Heart left ventricle (tissue), 16 donors: ENCODE measurements at regions of chr20 and their contacts with region 1.

Region 1: GRCh38 chr20:44467289-44467883 is 8.3 kb upstream of the TTPAL start:
- DNase-seq: peak in 1 of 5 donors; percentile 66
- ATAC-seq: peak; percentile 48 to 77 (median 68)
- H3K4me3 ChIP-seq: no peak overlapping the region
- H3K27ac ChIP-seq: peak overlapping the region in 1 of 12 donors; percentile 31
- H3K4me1 ChIP-seq: peaks cover 0 to 5% (median 0%) of the 10 kb centered on the region in 12 donors
- H3K27me3 ChIP-seq: no peaks in the 10 kb centered on the region
- CTCF ChIP-seq: no peak
- POLR2A ChIP-seq: no peak

Region 2: DNA sequence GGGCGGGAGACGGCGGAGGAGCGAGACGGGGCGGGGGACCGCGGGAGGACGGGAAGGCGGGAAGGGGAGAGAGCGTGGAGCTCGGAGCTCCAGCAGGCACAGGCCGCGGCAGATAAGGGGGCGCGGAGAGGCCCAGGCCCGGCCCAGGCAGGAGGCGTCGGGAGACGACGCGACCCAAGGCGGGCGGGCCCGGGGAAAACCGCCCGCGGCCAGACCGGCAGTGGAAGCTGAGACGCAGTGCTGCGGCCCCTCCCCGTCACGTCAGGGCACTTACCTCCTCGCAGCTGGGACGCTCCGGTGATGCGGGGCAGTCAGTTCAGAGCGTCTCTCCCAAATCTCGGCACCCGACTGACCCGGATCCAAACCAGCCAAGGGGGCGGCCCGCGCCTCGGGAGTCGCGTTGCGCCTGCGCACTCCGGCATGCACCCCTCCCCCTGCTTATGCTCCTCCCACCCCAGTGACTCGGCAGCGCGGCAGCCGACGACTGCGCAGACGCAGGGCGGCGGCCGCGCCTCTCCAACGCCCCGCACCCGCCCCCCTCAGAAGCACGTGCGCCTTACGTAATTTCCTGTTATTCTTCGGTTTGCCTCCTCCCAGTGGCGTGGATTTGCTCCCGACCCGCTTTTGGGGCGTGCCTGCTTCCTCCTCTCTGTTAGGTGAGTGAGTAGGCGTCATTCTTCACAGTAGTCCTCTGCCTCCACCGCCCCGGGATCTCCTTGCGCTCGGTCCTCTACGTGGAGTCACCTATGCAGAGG is 256.8 kb before region 1 on chr20 and contains the start of gene OSER1:
- intact Hi-C with region 1: loop called in 6 of 10 experiments (anchors 5 to 10 kb)
- DNase-seq: peak; percentile 97 to 99 (median 97)
- ATAC-seq: peak; percentile 90 to 95 (median 93)
- H3K4me3 ChIP-seq: peak within 1 kb of the TSS; percentile 63 to 98 (median 84)
- H3K27ac ChIP-seq: peak within 1 kb of the TSS; percentile 85 to 97 (median 92)
- H3K4me1 ChIP-seq: peaks cover 7 to 56% (median 42%) of the 10 kb centered on the region in 12 donors
- H3K27me3 ChIP-seq: no peaks in the 10 kb centered on the region
- CTCF ChIP-seq: no peak
- POLR2A ChIP-seq: peak; percentile 77 to 89
- total RNA-seq, gene OSER1: 20.6 to 39.0 (median 34.1) TPM

Region 3: DNA sequence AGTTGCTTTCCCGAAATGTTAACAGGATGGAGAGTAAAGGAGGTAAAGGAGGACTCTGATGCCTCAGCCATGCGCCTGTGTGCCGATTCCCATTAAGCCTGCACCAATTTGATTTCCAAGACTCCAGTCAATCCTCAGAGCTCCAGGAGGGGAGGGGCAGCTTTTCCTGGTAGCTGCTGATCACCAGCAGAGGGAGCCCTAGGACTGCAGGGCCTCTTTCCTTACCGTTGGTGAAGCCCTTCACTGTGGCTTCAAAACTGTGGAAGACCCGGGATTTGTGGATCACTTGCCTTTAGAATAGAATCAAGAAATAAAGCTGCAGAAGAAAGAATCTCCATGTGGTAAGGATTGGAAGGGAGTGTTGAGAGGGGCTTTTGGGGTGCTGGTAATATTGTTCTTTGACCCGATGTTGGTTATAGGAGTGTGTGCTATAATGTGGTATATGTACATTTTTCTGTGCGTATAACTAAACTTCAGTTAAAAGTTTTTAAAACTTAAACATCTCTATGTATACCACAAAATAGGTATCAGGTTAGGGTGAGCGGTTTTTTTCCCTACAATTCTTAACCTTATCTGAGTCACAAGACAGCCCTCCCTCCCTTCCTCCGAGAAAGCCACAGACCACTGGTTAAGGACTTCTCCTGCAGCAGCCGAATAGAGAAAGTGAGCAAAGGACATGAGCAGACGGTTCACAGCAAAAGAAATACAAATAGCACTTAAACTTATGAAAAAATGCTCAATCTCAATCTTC is 249.9 kb before region 1 on chr20:
- intact Hi-C with region 1: loop called in 7 of 10 experiments (anchors 5 to 10 kb)
- DNase-seq: peak; percentile 64 to 84 (median 69)
- ATAC-seq: peak in 3 of 4 donors; percentile 76 to 81 (median 78)
- H3K4me3 ChIP-seq: peak overlapping the region in 11 of 12 donors; percentile 3 to 46 (median 33)
- H3K27ac ChIP-seq: peak overlapping the region in 10 of 12 donors; percentile 12 to 72 (median 41)
- H3K4me1 ChIP-seq: peaks cover 0 to 21% (median 11%) of the 10 kb centered on the region in 12 donors
- H3K27me3 ChIP-seq: no peaks in the 10 kb centered on the region
- CTCF ChIP-seq: peak; percentile 76 to 92 (median 86)
- POLR2A ChIP-seq: no peak

Region 4: DNA sequence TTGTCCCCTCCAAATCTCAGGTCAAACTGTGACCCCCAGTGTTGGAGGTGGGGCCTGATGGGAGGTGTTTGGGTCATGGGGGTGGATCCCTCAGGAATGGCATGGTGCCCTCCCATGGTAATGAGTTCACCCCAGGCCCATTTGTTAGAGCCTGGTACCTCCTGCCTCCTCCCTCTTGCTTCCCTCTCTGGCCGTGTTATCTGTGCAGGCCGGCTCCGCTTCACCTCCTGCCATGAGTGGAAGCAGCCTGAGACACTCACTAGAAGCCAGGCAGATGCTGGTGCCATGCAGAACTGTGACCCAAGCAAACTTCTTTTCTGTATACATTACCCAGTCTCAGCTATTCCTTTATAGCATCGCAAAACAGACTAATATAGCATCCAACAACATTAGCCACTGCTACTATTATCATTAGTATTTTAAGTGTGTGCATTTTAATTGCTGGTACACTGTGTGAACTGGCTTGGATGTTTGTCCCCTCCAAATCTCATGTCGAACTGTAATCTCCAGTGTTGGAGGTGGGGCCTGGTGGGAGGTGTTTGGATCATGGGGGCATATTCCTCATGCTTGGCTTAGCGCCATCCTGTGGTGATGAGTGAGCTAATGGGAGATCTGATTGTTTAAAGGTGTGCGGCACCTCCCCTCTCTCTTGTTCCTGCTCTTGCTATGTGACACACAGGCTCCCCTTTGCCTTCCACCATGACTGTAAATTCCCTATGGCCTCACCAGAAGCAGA is 244.6 kb before region 1 on chr20:
- intact Hi-C with region 1: loop called in 6 of 10 experiments (anchors 5 to 10 kb)
- DNase-seq: peak in 1 of 5 donors; percentile 50
- ATAC-seq: peak; percentile 33 to 65 (median 50)
- H3K4me3 ChIP-seq: no peak overlapping the region
- H3K27ac ChIP-seq: peak overlapping the region in 6 of 12 donors; percentile 20 to 74 (median 38)
- H3K4me1 ChIP-seq: peaks cover 0 to 21% (median 13%) of the 10 kb centered on the region in 12 donors
- H3K27me3 ChIP-seq: no peaks in the 10 kb centered on the region
- CTCF ChIP-seq: no peak
- POLR2A ChIP-seq: no peak

Region 5: GRCh38 chr20:44302026-44302669 is 165.2 kb before region 1 on chr20:
- intact Hi-C with region 1: no loop called
- DNase-seq: peak in 2 of 5 donors; percentile 53
- ATAC-seq: peak; percentile 57 to 77 (median 76)
- H3K4me3 ChIP-seq: no peak overlapping the region
- H3K27ac ChIP-seq: peak overlapping the region in 11 of 12 donors; percentile 11 to 95 (median 51)
- H3K4me1 ChIP-seq: peaks cover 0 to 65% (median 21%) of the 10 kb centered on the region in 12 donors
- H3K27me3 ChIP-seq: no peaks in the 10 kb centered on the region
- CTCF ChIP-seq: no peak
- POLR2A ChIP-seq: no peak

Region 6: GRCh38 chr20:44422083-44422482 is 45.3 kb before region 1 on chr20:
- intact Hi-C with region 1: no loop called
- DNase-seq: peak in 1 of 5 donors; percentile 16
- ATAC-seq: no peak
- H3K4me3 ChIP-seq: no peak overlapping the region
- H3K27ac ChIP-seq: no peak overlapping the region
- H3K4me1 ChIP-seq: no peaks in the 10 kb centered on the region
- H3K27me3 ChIP-seq: peaks cover 0 to 21% (median 0%) of the 10 kb centered on the region in 9 donors
- CTCF ChIP-seq: no peak
- POLR2A ChIP-seq: no peak